MCF 10A (cell line): ENCODE measurements at regions of chr1 and their contacts with region 1.

Region 1: DNA sequence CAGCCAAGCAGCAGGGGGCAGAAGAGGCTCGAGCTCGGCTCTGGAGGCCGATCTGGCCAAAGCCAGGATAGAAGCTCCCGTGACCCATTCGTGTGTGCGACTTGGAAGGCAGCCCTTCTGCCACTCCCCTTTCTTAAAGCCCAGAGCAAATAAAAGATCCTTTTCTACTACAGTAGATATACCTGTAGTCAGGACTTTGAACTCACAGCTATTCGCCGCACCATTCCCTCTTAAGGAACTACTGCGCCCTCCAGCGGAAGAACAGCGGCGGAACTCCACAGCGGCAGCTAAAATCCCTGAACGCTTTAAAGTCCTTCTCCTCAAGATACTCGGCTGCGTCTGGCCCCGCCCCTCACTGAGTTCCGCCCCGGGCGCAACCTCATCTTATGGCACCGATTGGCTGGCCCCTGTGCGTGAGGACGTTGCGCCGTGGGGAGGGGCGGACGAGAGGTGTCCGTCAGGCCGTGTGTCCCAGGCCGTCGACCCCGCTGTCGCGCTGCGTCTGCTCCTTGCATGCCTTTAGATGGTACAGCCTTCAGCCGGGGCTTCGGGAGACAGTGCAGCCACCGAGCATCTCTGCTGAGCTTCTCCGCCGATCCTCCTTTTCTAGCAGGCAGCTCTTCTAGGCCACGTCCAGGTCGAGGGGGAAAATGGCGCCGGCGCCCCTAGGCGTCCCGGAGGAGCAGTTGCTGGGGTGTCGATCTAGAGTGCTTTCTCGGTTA is at the start of gene LRIG2:
- DNase-seq: peak; percentile 99
- H3K4me3 Mint-ChIP-seq: peak within 1 kb of the TSS; percentile 92
- H3K27ac Mint-ChIP-seq: peak within 1 kb of the TSS; percentile 96
- H3K4me1 Mint-ChIP-seq: peaks cover 15% of the 10 kb centered on the region
- H3K27me3 Mint-ChIP-seq: no peaks in the 10 kb centered on the region
- CTCF ChIP-seq: peak; percentile 88
- total RNA-seq, gene LRIG2: 11.8 and 14.8 TPM in 2 replicates

Region 2: GRCh38 chr1:112809253-112809684 is 263.6 kb before region 1 on chr1:
- CTCF ChIA-PET with region 1: interaction called, 28 read pairs
- POLR2A ChIA-PET with region 1: interaction called, 5 read pairs
- intact Hi-C with region 1: loop called (anchors 10 kb)
- DNase-seq: peak; percentile 80
- H3K4me3 Mint-ChIP-seq: no peak overlapping the region
- H3K27ac Mint-ChIP-seq: no peak overlapping the region
- H3K4me1 Mint-ChIP-seq: peaks cover 5% of the 10 kb centered on the region
- H3K27me3 Mint-ChIP-seq: no peaks in the 10 kb centered on the region
- CTCF ChIP-seq: peak; percentile 82

Region 3: GRCh38 chr1:112882271-112882744 is 190.6 kb before region 1 on chr1:
- CTCF ChIA-PET with region 1: interaction called, 40 read pairs
- POLR2A ChIA-PET with region 1: interaction called, 9 read pairs
- intact Hi-C with region 1: no loop called
- DNase-seq: no peak
- H3K4me3 Mint-ChIP-seq: no peak overlapping the region
- H3K27ac Mint-ChIP-seq: peak overlapping the region; percentile 43
- H3K4me1 Mint-ChIP-seq: peaks cover 20% of the 10 kb centered on the region
- H3K27me3 Mint-ChIP-seq: no peaks in the 10 kb centered on the region
- CTCF ChIP-seq: no peak

Region 4: GRCh38 chr1:112935461-112936289 is 137.2 kb before region 1 on chr1:
- CTCF ChIA-PET with region 1: interaction called, 16 read pairs
- POLR2A ChIA-PET with region 1: interaction called, 16 read pairs
- intact Hi-C with region 1: no loop called
- DNase-seq: peak; percentile 70
- H3K4me3 Mint-ChIP-seq: peak overlapping the region; percentile 26
- H3K27ac Mint-ChIP-seq: peak overlapping the region; percentile 68
- H3K4me1 Mint-ChIP-seq: peaks cover 28% of the 10 kb centered on the region
- H3K27me3 Mint-ChIP-seq: no peaks in the 10 kb centered on the region
- CTCF ChIP-seq: no peak

Region 5: GRCh38 chr1:113036639-113037321 is 36.1 kb before region 1 on chr1:
- CTCF ChIA-PET with region 1: interaction called, 46 read pairs
- POLR2A ChIA-PET with region 1: interaction called, 7 read pairs
- intact Hi-C with region 1: no loop called
- DNase-seq: peak; percentile 70
- H3K4me3 Mint-ChIP-seq: no peak overlapping the region
- H3K27ac Mint-ChIP-seq: peak overlapping the region; percentile 46
- H3K4me1 Mint-ChIP-seq: peaks cover 7% of the 10 kb centered on the region
- H3K27me3 Mint-ChIP-seq: no peaks in the 10 kb centered on the region
- CTCF ChIP-seq: no peak

Region 6: GRCh38 chr1:113057006-113057405 is 15.9 kb before region 1 on chr1:
- CTCF ChIA-PET with region 1: interaction called, 36 read pairs
- POLR2A ChIA-PET with region 1: interaction called, 17 read pairs
- intact Hi-C with region 1: no loop called
- DNase-seq: no peak
- H3K4me3 Mint-ChIP-seq: no peak overlapping the region
- H3K27ac Mint-ChIP-seq: no peak overlapping the region
- H3K4me1 Mint-ChIP-seq: no peaks in the 10 kb centered on the region
- H3K27me3 Mint-ChIP-seq: no peaks in the 10 kb centered on the region
- CTCF ChIP-seq: no peak

Region 7: GRCh38 chr1:113103042-113103441 is 30.1 kb after region 1 on chr1:
- CTCF ChIA-PET with region 1: interaction called, 19 read pairs
- POLR2A ChIA-PET with region 1: interaction called, 4 read pairs
- intact Hi-C with region 1: no loop called
- DNase-seq: no peak
- H3K4me3 Mint-ChIP-seq: no peak overlapping the region
- H3K27ac Mint-ChIP-seq: no peak overlapping the region
- H3K4me1 Mint-ChIP-seq: no peaks in the 10 kb centered on the region
- H3K27me3 Mint-ChIP-seq: no peaks in the 10 kb centered on the region
- CTCF ChIP-seq: no peak